GM12878 (cell line): ENCODE measurements at regions of chr16 and their contacts with region 1.

Region 1: GRCh38 chr16:53130159-53131049 is 75.6 kb downstream of the CHD9 start:
- DNase-seq: peak; percentile 68
- ATAC-seq: peak; percentile 91
- H3K4me3 ChIP-seq: peak overlapping the region; percentile 67
- H3K27ac ChIP-seq: peak overlapping the region; percentile 79
- H3K4me1 ChIP-seq: peaks cover 20% of the 10 kb centered on the region
- H3K27me3 ChIP-seq: no peaks in the 10 kb centered on the region
- CTCF ChIP-seq: peak; percentile 47 to 81 (median 58); a peak in 5 of 6 replicates
- EP300 ChIP-seq: no peak; a peak in 1 of 4 replicates
- POLR2A ChIP-seq: peak; percentile 81
- RAD21 ChIP-seq: peak; percentile 73

Region 2: GRCh38 chr16:53099318-53100130 is 30.9 kb before region 1 on chr16:
- CTCF ChIA-PET with region 1: interaction called, 6 read pairs
- POLR2A ChIA-PET with region 1: interaction called, 5 read pairs
- RAD21 ChIA-PET with region 1: interaction called, 17 read pairs
- SMC1A ChIA-PET with region 1: interaction called, 16 read pairs
- in situ Hi-C with region 1: no loop called
- intact Hi-C with region 1: loop called (anchors 1 kb)
- DNase-seq: peak; percentile 68
- ATAC-seq: peak; percentile 75
- H3K4me3 ChIP-seq: peak overlapping the region; percentile 79
- H3K27ac ChIP-seq: peak overlapping the region; percentile 96
- H3K4me1 ChIP-seq: peaks cover 25% of the 10 kb centered on the region
- H3K27me3 ChIP-seq: no peaks in the 10 kb centered on the region
- CTCF ChIP-seq: no peak
- EP300 ChIP-seq: peak; percentile 7 to 55; a peak in 1 of 4 replicates
- POLR2A ChIP-seq: peak; percentile 50
- RAD21 ChIP-seq: no peak

Region 3: GRCh38 chr16:53111078-53111791 is 19.2 kb before region 1 on chr16:
- CTCF ChIA-PET with region 1: interaction called, 10 read pairs
- POLR2A ChIA-PET with region 1: interaction called, 3 read pairs
- RAD21 ChIA-PET with region 1: interaction called, 13 read pairs
- SMC1A ChIA-PET with region 1: interaction called, 23 read pairs
- in situ Hi-C with region 1: no loop called
- intact Hi-C with region 1: no loop called
- DNase-seq: no peak
- ATAC-seq: peak; percentile 79
- H3K4me3 ChIP-seq: no peak overlapping the region; the same call in 1 of the 2 replicates
- H3K27ac ChIP-seq: peak overlapping the region; percentile 77
- H3K4me1 ChIP-seq: peaks cover 28% of the 10 kb centered on the region
- H3K27me3 ChIP-seq: no peaks in the 10 kb centered on the region
- CTCF ChIP-seq: no peak
- EP300 ChIP-seq: no peak
- POLR2A ChIP-seq: no peak
- RAD21 ChIP-seq: no peak

Region 4: GRCh38 chr16:53159781-53160436 is 29.5 kb after region 1 on chr16:
- CTCF ChIA-PET with region 1: interaction called, 18 read pairs
- POLR2A ChIA-PET with region 1: no interaction called
- RAD21 ChIA-PET with region 1: interaction called, 3 read pairs
- SMC1A ChIA-PET with region 1: interaction called, 8 read pairs
- in situ Hi-C with region 1: no loop called
- intact Hi-C with region 1: loop called (anchors 2 kb)
- DNase-seq: peak; percentile 20
- ATAC-seq: peak; percentile 99
- H3K4me3 ChIP-seq: no peak overlapping the region
- H3K27ac ChIP-seq: no peak overlapping the region
- H3K4me1 ChIP-seq: no peaks in the 10 kb centered on the region
- H3K27me3 ChIP-seq: no peaks in the 10 kb centered on the region
- CTCF ChIP-seq: peak; percentile 61 to 67 (median 65)
- EP300 ChIP-seq: no peak
- POLR2A ChIP-seq: no peak
- RAD21 ChIP-seq: peak; percentile 66

Region 5: GRCh38 chr16:53183442-53183841 is 53.0 kb after region 1 on chr16:
- CTCF ChIA-PET with region 1: no interaction called
- POLR2A ChIA-PET with region 1: no interaction called
- RAD21 ChIA-PET with region 1: no interaction called
- SMC1A ChIA-PET with region 1: no interaction called
- in situ Hi-C with region 1: no loop called
- intact Hi-C with region 1: no loop called
- DNase-seq: no peak
- ATAC-seq: no peak
- H3K4me3 ChIP-seq: no peak overlapping the region
- H3K27ac ChIP-seq: no peak overlapping the region
- H3K4me1 ChIP-seq: no peaks in the 10 kb centered on the region
- H3K27me3 ChIP-seq: no peaks in the 10 kb centered on the region
- CTCF ChIP-seq: no peak
- EP300 ChIP-seq: no peak
- POLR2A ChIP-seq: no peak
- RAD21 ChIP-seq: no peak

Region 6: GRCh38 chr16:53457670-53458069 is 327.3 kb after region 1 on chr16:
- CTCF ChIA-PET with region 1: no interaction called
- POLR2A ChIA-PET with region 1: no interaction called
- RAD21 ChIA-PET with region 1: no interaction called
- SMC1A ChIA-PET with region 1: no interaction called
- in situ Hi-C with region 1: no loop called
- intact Hi-C with region 1: no loop called
- DNase-seq: peak; percentile 92
- ATAC-seq: peak; percentile 100
- H3K4me3 ChIP-seq: no peak overlapping the region
- H3K27ac ChIP-seq: peak overlapping the region; percentile 61; the same call in 1 of the 2 replicates
- H3K4me1 ChIP-seq: peaks cover 28% of the 10 kb centered on the region
- H3K27me3 ChIP-seq: no peaks in the 10 kb centered on the region
- CTCF ChIP-seq: 0 out of 6 replicates have a peak, but pooled peaks of 1 of the 3 experiments have one; percentile 8
- EP300 ChIP-seq: peak; percentile 88 to 90
- POLR2A ChIP-seq: no peak
- RAD21 ChIP-seq: peak; percentile 31